Transverse colon (tissue), 4 donors: ENCODE measurements at regions of chr11 and their contacts with region 1.

Region 1: DNA sequence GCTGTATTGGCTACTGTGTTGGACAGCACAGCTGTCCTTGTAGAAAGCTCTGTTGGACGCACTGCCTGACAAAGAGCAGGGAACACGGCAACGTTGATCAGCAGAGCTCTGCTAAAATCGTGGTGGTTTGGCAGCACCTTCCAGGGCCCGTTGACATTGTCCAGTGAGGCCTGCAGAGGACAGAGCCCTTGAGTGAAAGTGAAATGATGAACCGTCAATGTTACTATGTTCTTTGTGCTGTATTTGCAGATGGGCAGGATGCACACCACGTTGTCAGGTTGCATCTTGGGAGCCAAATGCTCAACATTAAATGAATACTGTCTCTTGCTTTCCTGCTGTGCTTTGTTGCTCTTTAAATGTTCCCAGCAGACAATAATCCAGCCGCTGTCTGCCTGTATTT is 69.7 kb downstream of the NELL1 start:
- DNase-seq: no peak
- H3K4me3 ChIP-seq: no peak overlapping the region
- H3K27ac ChIP-seq: no peak overlapping the region
- H3K4me1 ChIP-seq: no peaks in the 10 kb centered on the region
- H3K27me3 ChIP-seq: no peaks in the 10 kb centered on the region
- CTCF ChIP-seq: no peak
- EP300 ChIP-seq: no peak
- POLR2A ChIP-seq: no peak

Region 2: DNA sequence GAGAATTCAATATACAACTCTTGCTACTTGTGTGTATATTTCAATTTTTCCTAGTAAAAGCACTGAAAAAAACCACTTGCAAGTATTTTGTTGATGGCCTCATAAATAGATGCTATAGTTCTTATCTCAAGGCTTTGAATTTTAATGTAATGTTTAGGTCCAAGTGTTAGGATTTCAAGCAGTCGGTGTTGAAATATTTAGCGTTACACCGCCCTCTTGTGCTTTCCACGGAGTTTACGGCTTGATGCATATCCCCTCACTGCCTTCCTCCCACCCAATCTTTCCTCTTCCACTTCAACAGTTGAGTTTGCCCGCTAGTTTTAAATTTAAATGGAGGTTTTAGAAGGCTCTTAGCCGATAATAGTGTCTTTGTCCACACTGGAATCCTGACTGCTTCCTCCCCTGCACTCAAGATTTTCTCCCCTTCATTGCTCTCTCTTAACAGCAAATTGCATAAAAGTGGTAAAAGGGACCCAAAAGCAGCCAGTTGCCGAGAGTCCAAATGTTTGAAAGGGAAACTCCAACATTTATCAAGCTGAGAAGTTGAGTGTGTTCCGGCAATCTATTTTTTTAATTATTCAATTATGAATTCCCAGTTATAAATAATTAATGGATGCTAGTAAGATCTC is 401.5 kb before region 1 on chr11:
- in situ Hi-C with region 1: no loop called
- intact Hi-C with region 1: no loop called
- DNase-seq: peak; percentile 13
- H3K4me3 ChIP-seq: no peak overlapping the region
- H3K27ac ChIP-seq: no peak overlapping the region
- H3K4me1 ChIP-seq: no peaks in the 10 kb centered on the region
- H3K27me3 ChIP-seq: peaks cover 18% of the 10 kb centered on the region
- CTCF ChIP-seq: peak in 3 of 5 experiments; percentile 26 to 29 (median 27)
- EP300 ChIP-seq: no peak
- POLR2A ChIP-seq: no peak

Region 3: DNA sequence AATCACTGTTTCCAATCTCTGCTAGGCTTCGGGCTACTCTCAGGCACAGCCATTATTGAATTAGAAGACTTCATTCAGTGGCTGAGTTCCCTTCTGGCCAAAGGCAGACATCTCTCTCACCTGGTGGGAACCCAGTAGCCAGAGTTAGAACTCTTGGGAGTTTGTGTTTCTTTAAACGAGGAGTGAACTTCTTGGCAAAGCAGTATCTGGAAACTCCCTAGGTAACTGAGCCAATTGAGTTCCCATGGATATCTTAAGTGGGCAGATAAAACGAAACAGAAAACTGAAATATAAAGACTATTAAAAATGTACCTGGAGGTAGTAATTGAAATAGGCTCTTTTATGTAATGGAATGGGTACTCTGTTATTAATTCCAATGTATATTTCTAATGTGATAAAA is 55.9 kb after region 1 on chr11:
- in situ Hi-C with region 1: no loop called
- intact Hi-C with region 1: loop called (anchors 2 kb)
- DNase-seq: no peak
- H3K4me3 ChIP-seq: no peak overlapping the region
- H3K27ac ChIP-seq: no peak overlapping the region
- H3K4me1 ChIP-seq: no peaks in the 10 kb centered on the region
- H3K27me3 ChIP-seq: no peaks in the 10 kb centered on the region
- CTCF ChIP-seq: no peak
- EP300 ChIP-seq: no peak
- POLR2A ChIP-seq: no peak